ENCODE measurements at regions of chr6 and their contacts with region 1.

Region 1: DNA sequence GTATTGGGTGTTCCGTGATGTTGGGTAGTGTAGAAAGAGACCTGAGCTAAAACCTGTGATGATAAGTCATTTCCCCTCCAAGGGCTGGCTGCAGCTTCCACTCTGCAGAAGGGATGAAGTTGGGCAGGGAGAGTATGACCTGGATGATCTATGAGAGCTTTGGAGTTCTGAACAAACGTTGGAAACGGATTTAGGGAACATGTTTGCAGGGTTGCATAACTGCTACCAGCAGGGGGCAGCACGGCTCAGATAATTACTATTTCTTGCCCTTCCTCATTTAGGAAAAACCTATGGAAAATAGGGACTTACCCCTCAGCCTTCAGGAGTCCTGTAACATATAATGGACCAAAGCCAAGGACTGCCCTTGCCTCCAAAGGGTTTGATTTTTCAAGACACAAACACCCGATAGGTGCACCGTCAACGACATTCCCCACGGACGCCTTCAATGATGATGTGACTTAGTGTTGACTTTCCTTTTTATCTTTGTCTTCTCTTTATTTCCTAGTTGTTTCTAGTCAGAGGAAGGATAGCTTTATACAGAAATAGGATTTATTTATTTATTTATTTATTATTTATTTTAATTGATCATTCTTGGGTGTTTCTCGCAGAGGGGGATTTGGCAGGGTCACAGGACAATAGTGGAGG is 164.9 kb upstream of the SASH1 start:
- DNase-seq: peak; percentile 72
- H3K4me3 ChIP-seq: no peak overlapping the region
- H3K27ac ChIP-seq: no peak overlapping the region
- H3K4me1 ChIP-seq: no peaks in the 10 kb centered on the region
- H3K27me3 ChIP-seq: no peaks in the 10 kb centered on the region
- CTCF ChIP-seq: peak; percentile 89

Region 2: GRCh38 chr6:148250975-148251685 is 73.4 kb after region 1 on chr6:
- CTCF ChIA-PET with region 1: no interaction called
- POLR2A ChIA-PET with region 1: no interaction called
- intact Hi-C with region 1: loop called (anchors 5 kb)
- DNase-seq: peak; percentile 37
- H3K4me3 ChIP-seq: no peak overlapping the region
- H3K27ac ChIP-seq: no peak overlapping the region
- H3K4me1 ChIP-seq: peaks cover 11% of the 10 kb centered on the region
- H3K27me3 ChIP-seq: no peaks in the 10 kb centered on the region
- CTCF ChIP-seq: peak; percentile 44

Region 3: GRCh38 chr6:148342357-148343046 is 164.8 kb after region 1 on chr6 and contains the start of gene SASH1:
- CTCF ChIA-PET with region 1: interaction called, 3 read pairs
- POLR2A ChIA-PET with region 1: no interaction called
- intact Hi-C with region 1: loop called (anchors 10 kb)
- DNase-seq: peak; percentile 86
- H3K4me3 ChIP-seq: peak within 1 kb of the TSS; percentile 66
- H3K27ac ChIP-seq: peak within 1 kb of the TSS; percentile 98
- H3K4me1 ChIP-seq: peaks cover 45% of the 10 kb centered on the region
- H3K27me3 ChIP-seq: no peaks in the 10 kb centered on the region
- CTCF ChIP-seq: no peak
- total RNA-seq, gene SASH1: 19.2 and 21.7 TPM in 2 replicates

Region 4: DNA sequence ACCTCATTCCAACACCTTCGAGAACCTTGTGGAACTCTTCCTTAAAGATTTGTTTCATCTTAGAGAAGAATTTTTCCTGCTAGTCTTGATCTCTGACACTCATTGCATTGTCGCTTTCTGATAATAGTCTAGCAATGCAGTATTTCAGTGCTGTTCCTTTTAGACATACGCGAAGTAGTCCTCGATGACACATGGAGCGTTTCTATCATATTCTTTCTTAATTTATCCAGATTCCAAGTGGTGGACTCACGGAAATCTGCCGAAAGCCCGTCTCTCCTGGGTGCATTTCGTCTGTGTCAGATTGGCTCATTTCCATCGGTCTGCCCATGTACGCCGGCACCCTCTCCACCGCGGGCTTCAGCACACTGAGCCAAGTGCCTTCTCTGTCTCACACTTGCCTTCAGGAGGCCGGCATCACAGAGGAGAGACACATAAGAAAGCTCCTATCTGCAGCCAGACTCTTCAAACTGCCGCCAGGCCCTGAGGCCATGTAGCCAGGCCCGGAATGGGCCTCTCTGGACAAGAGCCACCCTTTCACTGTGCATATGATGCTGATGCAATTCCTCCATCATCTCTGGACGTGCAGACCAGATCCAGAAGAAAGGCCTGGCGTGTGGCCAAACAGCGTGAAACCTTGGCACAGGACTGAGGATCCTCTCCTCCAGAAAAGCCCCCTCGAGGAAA is 370.5 kb after region 1 on chr6:
- CTCF ChIA-PET with region 1: no interaction called
- POLR2A ChIA-PET with region 1: no interaction called
- intact Hi-C with region 1: no loop called
- DNase-seq: no peak
- H3K4me3 ChIP-seq: no peak overlapping the region
- H3K27ac ChIP-seq: no peak overlapping the region
- H3K4me1 ChIP-seq: no peaks in the 10 kb centered on the region
- H3K27me3 ChIP-seq: no peaks in the 10 kb centered on the region
- CTCF ChIP-seq: no peak

Measured in A673 (cell line).